ENCODE measurements at regions of chr18 and their contacts with region 1.

Region 1: GRCh38 chr18:59070181-59070912 is 69.3 kb upstream of the SEC11C start:
- DNase-seq: peak; percentile 49
- H3K27ac ChIP-seq: peak overlapping the region; percentile 23; the same call in 1 of the 2 replicates
- CTCF ChIP-seq: peak; percentile 77

Region 2: GRCh38 chr18:59083136-59083818 is 12.9 kb after region 1 on chr18:
- CTCF ChIA-PET with region 1: interaction called, 14 read pairs
- POLR2A ChIA-PET with region 1: no interaction called
- DNase-seq: no peak
- H3K27ac ChIP-seq: no peak overlapping the region
- CTCF ChIP-seq: no peak

Measured in RWPE1 (cell line).